Colonic mucosa (tissue), 4 donors: ENCODE measurements at regions of chr5 and their contacts with region 1.

Region 1: DNA sequence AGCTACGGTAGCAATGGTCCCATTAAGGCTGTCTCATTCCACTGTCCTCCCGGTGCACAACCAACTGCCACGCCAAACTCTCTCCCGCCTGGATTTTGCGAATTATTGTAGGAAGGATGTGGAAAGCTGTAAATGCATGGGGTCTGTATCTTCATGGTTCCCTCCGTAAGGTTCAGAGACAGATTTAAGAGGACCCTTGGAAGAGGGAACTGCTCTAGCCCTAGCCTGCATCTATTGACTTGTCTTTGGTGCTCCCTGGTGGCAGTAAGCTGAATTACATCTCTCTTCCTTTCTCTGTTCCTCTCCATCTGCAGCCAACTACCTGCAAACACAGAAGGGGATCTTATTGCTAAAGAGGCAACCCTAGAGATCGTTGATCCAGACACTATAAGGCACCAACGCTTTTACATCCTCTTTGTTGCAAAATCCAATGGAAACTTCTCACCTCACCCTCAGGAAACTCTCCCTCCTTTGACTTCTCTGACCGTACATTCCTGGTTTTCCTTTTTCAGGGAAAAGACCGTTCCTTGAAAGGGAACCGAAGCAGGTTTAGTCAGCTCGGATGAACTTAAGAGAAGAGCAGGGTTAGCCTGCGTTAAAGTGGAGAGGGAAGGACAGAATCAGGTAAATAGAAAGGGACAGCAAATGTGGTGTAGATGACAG is 11.9 kb downstream of the CAPSL start:
- DNase-seq: peak; percentile 53
- H3K4me3 ChIP-seq: no peak overlapping the region
- H3K27ac ChIP-seq: no peak overlapping the region
- H3K4me1 ChIP-seq: no peaks in the 10 kb centered on the region
- H3K27me3 ChIP-seq: no peaks in the 10 kb centered on the region
- CTCF ChIP-seq: peak; percentile 84

Region 2: GRCh38 chr5:35089334-35090314 is 836.9 kb before region 1 on chr5:
- intact Hi-C with region 1: loop called (anchors 2 kb)
- DNase-seq: peak; percentile 82
- H3K4me3 ChIP-seq: no peak overlapping the region
- H3K27ac ChIP-seq: no peak overlapping the region
- H3K4me1 ChIP-seq: no peaks in the 10 kb centered on the region
- H3K27me3 ChIP-seq: no peaks in the 10 kb centered on the region
- CTCF ChIP-seq: peak; percentile 69

Region 3: GRCh38 chr5:35617435-35618303 is 308.9 kb before region 1 on chr5 and contains the start of gene SPEF2:
- intact Hi-C with region 1: loop called (anchors 5 kb)
- DNase-seq: peak; percentile 84
- H3K4me3 ChIP-seq: peak within 1 kb of the TSS; percentile 77
- H3K27ac ChIP-seq: no peak within 1 kb of the TSS
- H3K4me1 ChIP-seq: peaks cover 5% of the 10 kb centered on the region
- H3K27me3 ChIP-seq: no peaks in the 10 kb centered on the region
- CTCF ChIP-seq: peak; percentile 58
- total RNA-seq, gene SPEF2: 3.3 to 6.0 TPM

Region 4: GRCh38 chr5:35651002-35651756 is 275.3 kb before region 1 on chr5:
- intact Hi-C with region 1: loop called (anchors 10 kb)
- DNase-seq: peak; percentile 22
- H3K4me3 ChIP-seq: no peak overlapping the region
- H3K27ac ChIP-seq: no peak overlapping the region
- H3K4me1 ChIP-seq: no peaks in the 10 kb centered on the region
- H3K27me3 ChIP-seq: no peaks in the 10 kb centered on the region
- CTCF ChIP-seq: peak; percentile 38

Region 5: GRCh38 chr5:35777358-35778087 is 149.0 kb before region 1 on chr5:
- intact Hi-C with region 1: loop called (anchors 2 kb)
- DNase-seq: peak; percentile 67
- H3K4me3 ChIP-seq: no peak overlapping the region
- H3K27ac ChIP-seq: no peak overlapping the region
- H3K4me1 ChIP-seq: no peaks in the 10 kb centered on the region
- H3K27me3 ChIP-seq: no peaks in the 10 kb centered on the region
- CTCF ChIP-seq: peak; percentile 56

Region 6: DNA sequence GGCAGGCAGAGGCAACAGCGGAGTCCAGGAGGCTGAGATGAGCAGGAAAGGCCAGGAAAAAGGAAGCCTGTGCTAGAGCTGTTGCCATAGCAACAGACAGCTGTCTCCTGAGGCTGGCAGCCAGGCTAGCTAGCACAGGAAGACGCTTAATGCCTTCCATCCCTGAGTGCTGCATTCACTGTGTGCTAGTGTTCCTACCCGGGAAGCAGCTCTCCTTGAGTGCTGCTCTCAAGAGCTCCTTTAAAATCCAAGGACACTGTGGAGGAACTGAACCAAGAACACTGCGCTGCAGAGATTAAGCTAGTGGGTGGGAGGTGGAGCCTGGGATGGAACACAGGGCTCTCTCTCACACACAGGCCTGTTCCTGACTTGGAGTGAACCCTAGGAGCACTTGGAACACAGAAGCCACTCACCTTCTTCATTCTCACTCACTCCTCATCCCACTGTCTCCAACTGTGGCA is 123.3 kb before region 1 on chr5:
- intact Hi-C with region 1: no loop called
- DNase-seq: no peak
- H3K4me3 ChIP-seq: no peak overlapping the region
- H3K27ac ChIP-seq: no peak overlapping the region
- H3K4me1 ChIP-seq: no peaks in the 10 kb centered on the region
- H3K27me3 ChIP-seq: no peaks in the 10 kb centered on the region
- CTCF ChIP-seq: no peak